ENCODE measurements at regions of chr5 and their contacts with region 1.

Region 1: DNA sequence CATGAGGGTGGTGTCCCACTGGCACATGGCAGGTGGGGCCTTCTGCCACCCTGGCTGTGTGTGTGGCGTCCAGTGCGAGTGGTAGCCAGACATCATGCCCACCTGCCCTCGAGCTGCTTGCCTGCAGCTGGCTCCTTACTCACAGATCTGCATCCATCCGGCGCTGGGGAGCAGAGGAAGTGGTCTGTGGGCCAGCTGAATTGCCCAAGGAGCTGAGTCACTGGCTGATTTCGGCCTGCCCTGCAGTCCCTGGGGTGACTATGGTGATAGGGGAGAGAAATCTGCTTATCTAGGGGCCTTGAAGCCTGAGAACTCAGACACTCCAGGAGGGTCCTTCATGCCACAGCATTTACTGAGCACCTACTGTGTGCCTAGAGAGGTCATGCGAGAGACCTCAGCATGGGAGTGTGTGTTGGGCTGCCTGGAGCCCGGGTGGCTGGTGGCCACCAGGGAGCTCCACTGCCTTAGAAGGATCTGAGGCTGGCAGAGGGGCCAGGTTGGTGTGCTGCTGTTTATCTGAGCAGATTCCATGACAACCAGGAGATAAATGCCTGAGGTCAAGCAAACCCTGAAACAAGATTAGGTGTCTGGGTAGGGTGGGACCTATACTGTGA is 57.1 kb downstream of the SLC22A5 start:
- DNase-seq: peak; percentile 92 to 99 (median 99)
- H3K4me3 ChIP-seq: peak overlapping the region in 2 of 7 experiments; percentile 21 to 34
- H3K27ac ChIP-seq: peak overlapping the region; percentile 82 to 93
- H3K4me1 ChIP-seq: peaks cover 82 to 99% (median 99%) of the 10 kb centered on the region in 4 experiments
- H3K27me3 ChIP-seq: no peaks in the 10 kb centered on the region

Region 2: DNA sequence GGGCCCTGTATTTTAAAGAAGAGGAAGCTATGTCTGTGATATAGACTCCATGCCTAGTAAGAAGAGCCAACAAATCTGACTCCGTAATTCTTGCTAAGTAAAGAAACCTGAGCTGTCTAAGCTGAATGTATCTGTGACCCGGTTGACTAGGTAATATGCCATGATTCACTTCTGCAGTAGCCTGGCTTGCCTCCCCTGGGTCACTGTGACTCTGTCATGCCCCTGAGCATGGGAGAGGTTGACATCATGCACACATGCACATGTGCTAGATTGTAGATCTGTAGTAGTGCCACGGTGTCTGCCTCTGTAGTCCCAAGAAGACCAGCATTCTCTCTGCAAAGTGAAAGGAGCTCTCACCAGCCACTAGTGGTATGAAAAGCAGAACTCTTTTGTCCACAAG is 48.1 kb before region 1 on chr5:
- CTCF ChIA-PET with region 1: no interaction called
- POLR2A ChIA-PET with region 1: no interaction called
- DNase-seq: no peak
- H3K4me3 ChIP-seq: no peak overlapping the region
- H3K27ac ChIP-seq: no peak overlapping the region
- H3K4me1 ChIP-seq: peaks cover 0 to 5% (median 0%) of the 10 kb centered on the region in 4 experiments
- H3K27me3 ChIP-seq: no peaks in the 10 kb centered on the region

Region 3: GRCh38 chr5:132456296-132457001 is 29.8 kb after region 1 on chr5:
- CTCF ChIA-PET with region 1: interaction called, 159 read pairs
- POLR2A ChIA-PET with region 1: interaction called, 48 read pairs
- DNase-seq: peak; percentile 78 to 97 (median 95)
- H3K4me3 ChIP-seq: peak overlapping the region in 6 of 7 experiments; percentile 4 to 49 (median 18)
- H3K27ac ChIP-seq: peak overlapping the region; percentile 89 to 91
- H3K4me1 ChIP-seq: peaks cover 48 to 85% (median 82%) of the 10 kb centered on the region in 4 experiments
- H3K27me3 ChIP-seq: no peaks in the 10 kb centered on the region

Region 4: GRCh38 chr5:132473019-132473531 is 46.4 kb after region 1 on chr5:
- CTCF ChIA-PET with region 1: interaction called, 98 read pairs
- POLR2A ChIA-PET with region 1: interaction called, 7 read pairs
- DNase-seq: peak; percentile 78 to 96 (median 91)
- H3K4me3 ChIP-seq: peak overlapping the region in 1 of 7 experiments; percentile 39
- H3K27ac ChIP-seq: no peak overlapping the region
- H3K4me1 ChIP-seq: peaks cover 10 to 80% (median 64%) of the 10 kb centered on the region in 4 experiments
- H3K27me3 ChIP-seq: no peaks in the 10 kb centered on the region

Region 5: GRCh38 chr5:132495667-132496190 is 69.1 kb after region 1 on chr5:
- CTCF ChIA-PET with region 1: interaction called, 38 read pairs
- POLR2A ChIA-PET with region 1: interaction called, 29 read pairs
- DNase-seq: peak; percentile 87 to 94 (median 91)
- H3K4me3 ChIP-seq: peak overlapping the region in 6 of 7 experiments; percentile 38 to 91 (median 78)
- H3K27ac ChIP-seq: peak overlapping the region; percentile 41 to 86
- H3K4me1 ChIP-seq: peaks cover 15 to 66% (median 60%) of the 10 kb centered on the region in 4 experiments
- H3K27me3 ChIP-seq: no peaks in the 10 kb centered on the region